Activated CD8-positive, alpha-beta T cell treated with anti-CD3 and anti-CD28 coated beads for 36 hours (primary cell): ENCODE measurements at regions of chr19 and their contacts with region 1.

Region 1: DNA sequence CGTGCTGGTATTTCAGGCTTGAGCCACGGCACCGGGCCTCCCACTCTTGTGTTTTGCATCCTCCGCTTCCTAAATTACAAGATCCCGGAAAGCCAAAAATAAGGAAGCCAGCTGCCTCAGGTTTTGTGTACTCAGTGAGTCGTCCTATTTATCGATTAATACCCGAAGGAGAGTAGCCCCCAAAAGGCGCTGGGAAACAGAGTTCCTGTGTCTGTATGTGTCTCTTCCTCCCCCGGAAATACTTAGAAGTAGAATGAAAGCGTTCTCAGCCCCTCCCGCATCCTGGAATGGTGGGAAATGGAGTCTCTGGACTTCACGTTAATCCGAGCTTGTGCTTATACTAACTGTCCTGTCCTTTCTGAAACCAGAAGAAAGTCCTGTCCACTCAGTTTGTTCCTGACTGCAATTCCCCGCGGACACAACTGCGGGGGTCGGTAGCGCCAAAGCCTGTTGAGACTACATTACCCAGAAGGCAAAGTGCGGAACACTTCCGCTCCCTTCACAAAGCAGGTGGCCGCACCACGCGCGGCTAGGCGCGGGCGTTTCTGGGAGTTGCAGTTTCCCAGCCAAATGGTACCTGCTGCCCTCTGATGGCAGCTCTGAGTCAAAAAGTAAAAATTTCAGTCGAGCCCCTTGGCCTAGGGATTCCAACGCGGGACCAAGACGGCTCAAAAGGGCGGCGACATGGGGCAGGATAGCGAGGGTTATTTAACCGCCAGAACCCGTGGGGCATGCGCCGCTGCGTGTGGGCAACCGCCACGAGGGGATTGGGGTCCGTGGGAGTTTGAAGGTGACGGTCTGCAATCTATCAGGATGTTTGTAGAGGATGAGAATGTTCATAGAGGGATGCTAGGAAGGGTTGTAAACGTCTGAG is 2.2 kb upstream of the GSK3A start:
- DNase-seq: peak; percentile 97
- ATAC-seq: peak; percentile 45
- H3K4me3 Mint-ChIP-seq: peak overlapping the region; percentile 94
- H3K27ac Mint-ChIP-seq: peak overlapping the region; percentile 100
- H3K4me1 Mint-ChIP-seq: peaks cover 46% of the 10 kb centered on the region
- H3K27me3 Mint-ChIP-seq: no peaks in the 10 kb centered on the region
- CTCF ChIP-seq: peak; percentile 60

Region 2: DNA sequence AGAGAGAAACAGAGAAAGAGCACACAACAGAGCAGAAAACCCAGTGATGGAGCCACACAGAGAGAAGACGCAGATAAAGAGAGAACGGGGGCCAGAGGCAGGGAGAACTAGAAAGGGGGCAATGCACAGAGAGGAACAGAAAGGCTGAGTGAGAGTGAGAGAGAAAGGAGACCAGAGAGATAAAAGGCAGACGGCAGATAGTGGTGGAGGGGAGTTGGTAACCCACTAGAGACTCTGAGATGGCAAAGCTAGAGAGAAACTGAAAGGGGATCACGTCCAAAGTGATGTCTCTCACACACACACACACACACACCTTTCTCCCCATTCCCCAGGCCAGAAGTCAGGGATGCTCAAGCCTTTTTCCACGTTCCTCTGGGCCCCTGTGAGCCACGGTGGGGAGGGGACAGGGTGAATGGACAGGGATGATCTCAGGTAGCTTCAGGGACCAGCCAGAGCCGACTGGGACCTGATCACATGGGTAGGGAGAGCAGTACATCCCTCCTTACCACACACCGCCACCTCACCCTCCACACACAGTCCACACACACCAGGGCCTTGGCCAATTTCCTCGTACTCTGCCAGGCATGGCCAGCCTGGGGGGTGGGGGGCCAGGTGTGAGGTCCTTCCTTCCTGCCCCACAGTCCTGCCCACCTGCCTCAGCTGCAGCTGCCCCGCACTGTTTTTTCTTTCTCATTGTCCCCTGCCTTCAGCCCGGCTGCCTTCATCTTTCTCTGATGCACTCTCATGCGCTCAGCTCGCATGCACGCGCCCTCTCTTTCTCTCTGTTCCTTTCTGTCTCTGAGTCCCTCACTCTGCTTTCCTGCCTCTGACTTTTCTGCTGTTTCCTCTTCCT is 89.9 kb before region 1 on chr19:
- CTCF ChIA-PET with region 1: no interaction called
- POLR2A ChIA-PET with region 1: no interaction called
- intact Hi-C with region 1: no loop called
- DNase-seq: peak; percentile 25
- ATAC-seq: peak; percentile 74
- H3K4me3 Mint-ChIP-seq: peak overlapping the region; percentile 14
- H3K27ac Mint-ChIP-seq: peak overlapping the region; percentile 42
- H3K4me1 Mint-ChIP-seq: peaks cover 16% of the 10 kb centered on the region
- H3K27me3 Mint-ChIP-seq: no peaks in the 10 kb centered on the region
- CTCF ChIP-seq: no peak

Region 3: DNA sequence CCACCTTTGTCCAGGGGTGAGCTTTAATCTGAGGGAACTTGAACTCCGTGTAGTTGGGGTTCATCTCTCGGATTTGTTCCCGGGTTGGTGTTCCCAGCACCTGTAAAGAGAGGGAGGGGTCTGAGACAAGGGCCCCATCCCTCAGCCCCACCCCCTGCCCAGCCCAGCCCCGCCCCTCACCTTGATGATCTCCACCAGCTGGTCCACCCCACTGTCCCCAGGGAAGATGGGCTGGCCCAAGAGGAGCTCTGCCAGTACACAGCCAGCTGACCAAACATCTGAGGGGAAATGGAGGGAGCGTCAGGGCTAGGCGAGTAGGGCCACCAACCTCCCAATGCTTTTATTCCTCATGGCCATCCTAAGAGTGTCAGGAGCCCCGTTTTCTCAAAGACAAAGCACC is 11.5 kb before region 1 on chr19:
- CTCF ChIA-PET with region 1: interaction called, 6 read pairs
- POLR2A ChIA-PET with region 1: interaction called, 195 read pairs
- intact Hi-C with region 1: no loop called
- DNase-seq: no peak
- ATAC-seq: no peak
- H3K4me3 Mint-ChIP-seq: no peak overlapping the region
- H3K27ac Mint-ChIP-seq: no peak overlapping the region
- H3K4me1 Mint-ChIP-seq: peaks cover 24% of the 10 kb centered on the region
- H3K27me3 Mint-ChIP-seq: no peaks in the 10 kb centered on the region
- CTCF ChIP-seq: no peak

Region 4: GRCh38 chr19:42268704-42269477 is 24.3 kb after region 1 on chr19 and contains the start of gene CIC:
- CTCF ChIA-PET with region 1: interaction called, 5 read pairs
- POLR2A ChIA-PET with region 1: interaction called, 16 read pairs
- intact Hi-C with region 1: no loop called
- DNase-seq: peak; percentile 99
- ATAC-seq: peak; percentile 80
- H3K4me3 Mint-ChIP-seq: no peak within 1 kb of the TSS
- H3K27ac Mint-ChIP-seq: peak within 1 kb of the TSS; percentile 99
- H3K4me1 Mint-ChIP-seq: peaks cover 26% of the 10 kb centered on the region
- H3K27me3 Mint-ChIP-seq: no peaks in the 10 kb centered on the region
- CTCF ChIP-seq: no peak
- total RNA-seq, gene CIC: 60.7 to 65.6 TPM

Region 5: GRCh38 chr19:42295831-42296525 is 51.4 kb after region 1 on chr19:
- CTCF ChIA-PET with region 1: interaction called, 14 read pairs
- POLR2A ChIA-PET with region 1: interaction called, 3 read pairs
- intact Hi-C with region 1: no loop called
- DNase-seq: peak; percentile 95
- ATAC-seq: peak; percentile 99
- H3K4me3 Mint-ChIP-seq: no peak overlapping the region
- H3K27ac Mint-ChIP-seq: peak overlapping the region; percentile 15
- H3K4me1 Mint-ChIP-seq: peaks cover 6% of the 10 kb centered on the region
- H3K27me3 Mint-ChIP-seq: no peaks in the 10 kb centered on the region
- CTCF ChIP-seq: peak; percentile 94